Ovary (tissue), 10 donors: ENCODE measurements at regions of chrX and their contacts with region 1.

Region 1: DNA sequence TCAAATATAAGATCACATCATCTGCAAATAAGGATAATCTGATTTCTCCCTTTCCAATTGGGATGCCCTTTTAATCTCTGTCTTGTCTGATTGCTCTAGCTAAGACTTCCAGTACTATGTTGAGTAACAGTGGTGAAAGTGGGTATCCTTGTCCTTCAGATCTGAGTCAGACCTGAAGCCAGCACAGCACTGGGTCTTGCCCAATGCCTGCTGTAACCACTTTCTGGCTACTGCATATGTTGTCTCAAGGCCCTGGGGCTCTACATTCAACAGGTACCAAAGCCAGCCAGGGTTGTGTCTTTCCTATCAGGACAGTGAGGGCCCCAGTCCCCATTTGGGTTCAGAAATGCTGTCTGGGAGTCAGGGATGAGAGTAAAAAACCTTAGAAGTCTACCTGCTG is 90.3 kb downstream of the CYSLTR1 start:
- DNase-seq: no peak
- H3K4me3 ChIP-seq: no peak overlapping the region
- H3K27ac ChIP-seq: no peak overlapping the region
- H3K4me1 ChIP-seq: no peaks in the 10 kb centered on the region
- H3K27me3 ChIP-seq: no peaks in the 10 kb centered on the region
- CTCF ChIP-seq: no peak
- EP300 ChIP-seq: no peak
- POLR2A ChIP-seq: no peak

Region 2: GRCh38 chrX:76971393-76972376 is 1265.4 kb before region 1 on chrX:
- intact Hi-C with region 1: loop called in 1 of 4 experiments (anchors 5 kb)
- DNase-seq: no peak
- H3K4me3 ChIP-seq: no peak overlapping the region
- H3K27ac ChIP-seq: no peak overlapping the region
- H3K4me1 ChIP-seq: no peaks in the 10 kb centered on the region
- H3K27me3 ChIP-seq: no peaks in the 10 kb centered on the region
- CTCF ChIP-seq: no peak
- EP300 ChIP-seq: no peak
- POLR2A ChIP-seq: no peak

Region 3: DNA sequence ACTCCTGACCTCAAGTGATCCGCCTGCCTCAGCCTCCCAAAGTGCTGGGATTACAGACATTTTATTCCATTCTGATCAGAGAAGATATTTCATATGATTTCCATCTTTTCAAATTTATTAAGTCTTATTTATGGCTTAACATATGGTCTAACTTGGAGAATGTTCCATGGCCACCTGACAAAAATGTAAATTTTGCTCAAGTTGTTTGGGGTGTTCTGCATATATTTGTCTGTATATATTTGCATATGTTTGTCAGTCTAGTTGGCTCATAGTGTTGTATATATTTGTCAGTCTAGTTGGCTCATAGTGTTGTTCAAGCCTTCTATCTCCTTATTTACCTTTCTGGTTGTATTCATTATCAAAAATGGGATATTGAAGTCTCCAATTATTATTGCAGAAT is 434.9 kb before region 1 on chrX:
- intact Hi-C with region 1: no loop called
- DNase-seq: no peak
- H3K4me3 ChIP-seq: no peak overlapping the region
- H3K27ac ChIP-seq: no peak overlapping the region
- H3K4me1 ChIP-seq: no peaks in the 10 kb centered on the region
- H3K27me3 ChIP-seq: no peaks in the 10 kb centered on the region
- CTCF ChIP-seq: no peak
- EP300 ChIP-seq: no peak
- POLR2A ChIP-seq: no peak